MCF 10A (cell line): ENCODE measurements at regions of chr16 and their contacts with region 1.

Region 1: DNA sequence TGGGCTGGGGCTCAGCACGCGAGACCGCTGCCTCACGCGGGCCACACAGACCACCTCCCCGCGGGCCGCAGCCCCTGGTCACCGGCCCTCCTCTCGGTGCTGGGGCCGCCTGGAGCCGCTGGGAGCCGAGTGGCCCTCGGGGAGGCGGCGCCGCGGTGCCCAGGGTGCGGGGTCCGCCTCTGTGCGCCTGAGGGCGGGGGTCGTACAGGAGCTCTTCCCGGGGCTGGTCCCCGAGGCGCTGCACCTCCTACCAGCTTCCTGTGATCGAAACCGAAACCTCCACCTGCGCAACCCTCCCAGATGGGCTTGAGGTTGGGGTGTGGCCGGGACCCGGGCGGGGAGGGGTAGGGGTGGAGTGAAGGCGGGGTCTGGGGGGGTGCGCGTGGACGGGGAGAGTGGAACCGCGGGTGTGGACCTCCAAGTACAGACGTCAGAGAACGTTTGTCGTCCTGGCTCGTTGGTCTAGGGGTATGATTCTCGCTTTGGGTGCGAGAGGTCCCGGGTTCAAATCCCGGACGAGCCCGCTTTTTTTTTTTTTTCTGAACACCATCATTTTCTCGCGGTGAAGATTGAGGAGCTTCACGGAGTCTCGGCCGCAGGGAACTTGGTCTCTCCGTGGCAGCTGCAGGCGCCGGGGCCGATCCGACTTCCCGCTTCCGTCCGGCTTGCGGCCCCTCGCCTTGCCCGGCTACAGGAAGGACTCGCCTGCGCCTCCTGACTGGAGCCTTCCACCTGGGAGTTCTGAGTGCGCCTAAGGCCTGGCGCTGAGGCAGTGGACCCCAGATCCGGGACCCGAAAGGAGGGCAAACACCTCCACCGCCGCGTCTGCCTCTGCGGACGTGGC is 23.9 kb downstream of the ZNF213 start:
- DNase-seq: peak; percentile 95
- H3K4me3 Mint-ChIP-seq: peak overlapping the region; percentile 83
- H3K27ac Mint-ChIP-seq: peak overlapping the region; percentile 98
- H3K4me1 Mint-ChIP-seq: no peaks in the 10 kb centered on the region
- H3K27me3 Mint-ChIP-seq: no peaks in the 10 kb centered on the region
- CTCF ChIP-seq: no peak

Region 2: DNA sequence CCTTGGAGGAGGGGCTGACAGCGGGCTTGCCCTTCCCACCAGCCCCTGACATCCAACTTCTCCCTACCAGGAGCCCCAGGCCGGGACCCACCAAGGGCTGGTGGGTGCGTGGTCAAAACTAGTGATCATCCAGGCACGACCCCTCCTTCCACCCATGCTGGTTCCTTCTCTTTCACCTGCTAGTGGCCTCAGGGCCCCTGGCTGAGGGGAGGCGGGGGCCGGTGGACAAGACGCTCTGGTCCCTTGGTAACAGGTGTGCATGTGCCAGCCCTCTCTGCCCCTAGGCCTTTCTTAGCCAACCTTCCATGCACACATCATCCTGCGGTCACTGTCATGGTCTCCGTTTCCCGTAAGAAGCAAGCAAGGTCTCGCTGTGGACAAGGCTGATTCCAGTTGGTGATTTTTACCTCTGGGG is 15.5 kb before region 1 on chr16:
- CTCF ChIA-PET with region 1: no interaction called
- POLR2A ChIA-PET with region 1: no interaction called
- intact Hi-C with region 1: no loop called
- DNase-seq: no peak
- H3K4me3 Mint-ChIP-seq: no peak overlapping the region
- H3K27ac Mint-ChIP-seq: no peak overlapping the region
- H3K4me1 Mint-ChIP-seq: no peaks in the 10 kb centered on the region
- H3K27me3 Mint-ChIP-seq: no peaks in the 10 kb centered on the region
- CTCF ChIP-seq: no peak

Region 3: GRCh38 chr16:3173892-3174617 is 15.4 kb after region 1 on chr16:
- CTCF ChIA-PET with region 1: interaction called, 20 read pairs
- POLR2A ChIA-PET with region 1: interaction called, 8 read pairs
- intact Hi-C with region 1: loop called (anchors 1 kb)
- DNase-seq: peak; percentile 43
- H3K4me3 Mint-ChIP-seq: peak overlapping the region; percentile 67
- H3K27ac Mint-ChIP-seq: peak overlapping the region; percentile 57
- H3K4me1 Mint-ChIP-seq: peaks cover 6% of the 10 kb centered on the region
- H3K27me3 Mint-ChIP-seq: no peaks in the 10 kb centered on the region
- CTCF ChIP-seq: peak; percentile 13

Region 4: DNA sequence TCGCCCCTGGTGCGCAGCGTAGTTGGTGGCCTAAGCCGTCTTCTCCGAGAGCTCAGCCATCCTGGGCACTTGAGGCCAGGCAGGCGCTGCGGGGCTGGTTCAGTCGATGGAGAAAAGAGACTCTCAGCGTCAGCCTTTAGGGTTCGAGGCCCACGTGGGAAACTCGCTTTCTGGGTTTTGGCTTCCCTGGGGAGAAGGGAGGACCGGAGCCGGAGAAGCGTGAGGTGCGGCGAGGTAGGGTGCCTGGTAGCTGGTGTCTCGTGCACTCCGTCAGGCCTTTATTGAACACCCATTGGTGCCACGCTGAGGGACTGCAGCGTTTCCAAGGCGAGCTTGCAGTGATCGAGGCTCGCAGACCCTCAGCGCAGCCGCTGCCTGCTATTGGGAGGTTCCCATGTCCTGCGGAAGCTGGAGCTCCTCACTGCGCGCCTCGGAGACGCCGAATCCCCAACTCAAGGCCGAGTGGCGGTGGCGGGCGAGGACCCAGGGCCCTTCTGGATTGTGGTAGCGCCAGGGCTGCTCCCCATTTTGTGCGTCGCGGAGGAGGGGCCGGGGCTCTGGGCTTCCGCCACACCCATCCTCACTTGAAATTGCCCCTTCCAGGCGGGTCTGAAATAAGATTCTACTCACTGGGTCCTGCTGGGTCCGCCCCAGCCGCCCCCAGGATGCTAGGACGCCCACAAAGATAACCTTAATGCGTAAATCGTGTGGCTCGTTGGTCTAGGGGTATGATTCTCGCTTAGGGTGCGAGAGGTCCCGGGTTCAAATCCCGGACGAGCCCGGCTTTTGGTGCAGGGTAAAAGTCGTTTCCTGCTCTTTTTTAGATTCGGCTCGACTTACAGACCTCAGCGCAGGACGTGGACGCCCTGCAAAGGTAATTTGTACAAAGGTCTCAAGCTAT is 30.5 kb after region 1 on chr16:
- CTCF ChIA-PET with region 1: no interaction called
- POLR2A ChIA-PET with region 1: interaction called, 7 read pairs
- intact Hi-C with region 1: loop called (anchors 2 kb)
- DNase-seq: peak; percentile 72
- H3K4me3 Mint-ChIP-seq: peak overlapping the region; percentile 78
- H3K27ac Mint-ChIP-seq: peak overlapping the region; percentile 50
- H3K4me1 Mint-ChIP-seq: peaks cover 5% of the 10 kb centered on the region
- H3K27me3 Mint-ChIP-seq: no peaks in the 10 kb centered on the region
- CTCF ChIP-seq: no peak

Region 5: DNA sequence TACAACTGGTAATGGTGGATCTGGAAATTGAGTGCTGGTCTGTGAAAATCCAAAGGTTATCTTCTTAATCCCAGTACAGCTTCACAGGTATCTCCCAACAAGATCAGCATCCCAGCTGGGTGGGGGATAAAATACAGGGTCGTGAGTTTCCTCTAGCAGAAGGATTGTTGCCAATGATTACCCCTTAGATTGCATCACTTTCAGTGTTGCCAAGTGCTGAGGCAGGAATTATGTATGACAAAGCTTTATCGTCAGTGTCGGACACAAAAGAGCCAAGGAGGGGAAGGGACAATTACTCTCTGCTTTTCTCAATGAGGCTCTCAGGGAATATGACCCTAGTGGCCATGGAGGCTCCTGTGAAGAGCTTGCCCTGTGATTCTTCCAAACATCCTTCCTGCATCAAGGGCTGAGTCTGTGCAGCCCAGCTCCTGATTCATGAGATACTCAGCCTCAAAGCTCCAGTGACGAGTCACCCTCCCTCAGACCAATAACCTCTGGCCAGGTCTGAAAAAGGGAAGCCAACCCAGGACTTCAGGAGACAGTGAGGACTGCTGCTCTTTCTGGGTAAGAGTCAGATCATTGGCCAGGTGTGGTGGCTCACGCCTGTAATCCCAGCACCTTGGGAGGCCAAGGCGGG is 44.3 kb after region 1 on chr16:
- CTCF ChIA-PET with region 1: no interaction called
- POLR2A ChIA-PET with region 1: no interaction called
- intact Hi-C with region 1: no loop called
- DNase-seq: no peak
- H3K4me3 Mint-ChIP-seq: no peak overlapping the region
- H3K27ac Mint-ChIP-seq: no peak overlapping the region
- H3K4me1 Mint-ChIP-seq: no peaks in the 10 kb centered on the region
- H3K27me3 Mint-ChIP-seq: peaks cover 20% of the 10 kb centered on the region
- CTCF ChIP-seq: no peak

Region 6: DNA sequence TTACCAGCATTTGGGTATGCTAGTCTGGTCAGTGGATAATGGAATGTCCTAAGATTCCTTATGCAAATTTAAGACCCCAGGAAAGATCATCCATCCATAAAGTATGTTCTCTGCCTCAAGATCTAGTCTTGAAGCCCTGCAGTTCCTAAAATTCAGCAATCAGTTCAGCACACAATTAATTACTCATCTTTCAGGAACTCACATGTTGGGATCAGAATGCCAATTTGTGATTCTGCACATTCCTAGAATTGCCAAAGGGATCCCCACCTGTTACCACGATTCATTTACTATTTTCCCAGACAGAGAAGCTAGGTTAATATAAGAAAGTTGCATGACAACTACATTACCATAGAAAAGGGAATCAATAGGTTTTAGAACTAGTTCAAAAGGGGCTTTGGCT is 200.2 kb after region 1 on chr16:
- CTCF ChIA-PET with region 1: no interaction called
- POLR2A ChIA-PET with region 1: no interaction called
- intact Hi-C with region 1: no loop called
- DNase-seq: no peak
- H3K4me3 Mint-ChIP-seq: no peak overlapping the region
- H3K27ac Mint-ChIP-seq: no peak overlapping the region
- H3K4me1 Mint-ChIP-seq: no peaks in the 10 kb centered on the region
- H3K27me3 Mint-ChIP-seq: peaks cover 26% of the 10 kb centered on the region
- CTCF ChIP-seq: no peak